ENCODE measurements at regions of chr10 and their contacts with region 1.

Region 1: DNA sequence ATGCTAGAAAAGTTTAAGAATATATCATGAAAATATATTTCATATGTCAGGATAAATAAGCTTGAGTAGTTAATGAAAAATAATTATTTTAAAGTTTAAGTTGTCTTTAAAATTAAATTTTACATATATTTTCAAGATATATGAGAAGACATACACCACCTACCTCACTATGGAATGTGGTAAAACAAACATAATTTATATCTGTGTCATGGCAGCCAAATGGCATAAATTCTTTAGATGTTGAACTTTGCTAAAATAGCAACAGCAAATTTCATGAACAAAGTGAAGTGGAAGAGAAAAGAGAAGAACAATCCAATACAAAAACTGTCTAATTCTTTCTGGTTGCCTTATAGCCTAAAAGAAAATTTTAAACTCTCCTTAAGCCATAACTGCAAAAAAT is 39.6 kb upstream of the SLC16A12 start:
- DNase-seq: no peak

Region 2: GRCh38 chr10:89550509-89550908 is 24.5 kb before region 1 on chr10:
- intact Hi-C with region 1: no loop called
- DNase-seq: no peak

Region 3: DNA sequence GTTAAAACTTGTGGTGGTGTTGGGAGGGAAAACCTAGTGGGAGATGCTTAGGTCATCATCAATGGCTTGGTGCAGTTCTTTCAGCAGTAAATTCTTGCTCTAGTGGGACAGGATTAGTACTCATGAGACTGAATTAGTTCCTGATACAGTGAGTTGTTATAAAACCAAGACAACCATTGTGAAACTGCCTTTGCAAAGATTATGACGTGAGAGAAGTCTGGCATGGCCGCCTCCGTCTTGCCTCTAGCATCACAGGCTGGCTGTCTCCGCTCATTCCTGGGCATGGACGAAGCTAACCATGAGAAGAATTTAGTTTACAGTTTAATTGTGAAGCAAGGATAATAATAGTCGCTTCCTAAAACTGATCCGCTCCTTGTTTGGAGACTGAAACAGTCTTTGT is 312.8 kb after region 1 on chr10:
- intact Hi-C with region 1: loop called in 1 of 2 experiments (anchors 5 kb)
- DNase-seq: no peak

Measured in posterior vena cava (tissue), 2 donors.